ENCODE measurements at regions of chr18 and their contacts with region 1.

Region 1: DNA sequence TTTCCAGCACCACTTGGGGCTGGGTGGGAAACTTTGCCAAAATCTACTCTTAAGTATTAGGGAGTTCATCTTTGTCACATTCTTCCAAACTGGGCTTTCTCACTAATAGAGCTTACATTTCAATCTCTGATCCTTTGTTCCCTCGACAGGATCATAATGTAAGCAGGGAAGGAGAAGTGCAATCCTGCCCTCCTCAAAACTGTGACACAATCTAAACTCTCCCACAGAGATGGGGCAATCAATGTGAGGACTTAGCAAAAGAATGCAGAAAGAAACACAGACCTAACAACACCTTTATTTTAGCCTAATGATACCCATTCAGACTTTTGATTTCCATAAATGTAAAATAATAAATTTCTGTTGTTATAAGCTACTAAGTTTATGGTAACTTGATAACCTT is 40.8 kb downstream of the DSEL start:
- DNase-seq: no peak
- ATAC-seq: no peak
- H3K4me3 ChIP-seq: no peak overlapping the region
- H3K27ac ChIP-seq: no peak overlapping the region
- H3K4me1 ChIP-seq: no peaks in the 10 kb centered on the region
- H3K27me3 ChIP-seq: no peaks in the 10 kb centered on the region
- CTCF ChIP-seq: no peak

Region 2: GRCh38 chr18:65808759-65809158 is 1666.9 kb before region 1 on chr18:
- intact Hi-C with region 1: loop called in 1 of 10 experiments (anchors 5 kb)
- DNase-seq: no peak
- ATAC-seq: no peak
- H3K4me3 ChIP-seq: no peak overlapping the region
- H3K27ac ChIP-seq: no peak overlapping the region
- H3K4me1 ChIP-seq: no peaks in the 10 kb centered on the region
- H3K27me3 ChIP-seq: no peaks in the 10 kb centered on the region
- CTCF ChIP-seq: no peak

Region 3: GRCh38 chr18:67425724-67426123 is 49.9 kb before region 1 on chr18:
- intact Hi-C with region 1: no loop called
- DNase-seq: no peak
- ATAC-seq: no peak
- H3K4me3 ChIP-seq: no peak overlapping the region
- H3K27ac ChIP-seq: no peak overlapping the region
- H3K4me1 ChIP-seq: no peaks in the 10 kb centered on the region
- H3K27me3 ChIP-seq: no peaks in the 10 kb centered on the region
- CTCF ChIP-seq: no peak

Region 4: DNA sequence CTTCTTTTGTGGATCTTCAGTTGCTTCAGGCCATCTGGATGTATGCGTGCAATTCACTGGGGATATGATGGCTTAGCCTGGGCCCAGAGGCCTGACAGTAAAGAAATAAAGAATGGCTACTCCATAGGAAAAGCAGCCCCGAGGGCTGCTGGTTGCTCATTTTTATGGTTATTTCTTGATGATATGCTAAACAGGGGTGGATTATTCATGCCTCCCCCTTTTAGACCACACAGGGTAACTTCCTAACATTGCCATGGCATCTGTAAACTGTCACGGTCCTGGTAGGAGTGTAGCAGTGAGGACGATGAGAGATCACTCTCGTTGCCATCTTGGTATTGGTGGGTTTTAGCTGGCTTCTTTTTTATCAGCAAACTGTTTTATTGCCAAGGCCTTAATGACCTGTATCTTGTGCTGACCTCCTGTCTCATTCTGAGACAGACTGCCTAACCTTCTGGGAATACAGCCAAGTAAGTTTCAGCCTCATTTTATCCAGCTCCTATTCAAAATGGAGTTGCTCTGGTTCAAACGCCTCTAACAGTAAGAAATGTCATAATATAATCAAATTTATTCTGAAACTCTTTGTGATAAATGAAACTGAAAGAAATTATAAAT is 19.7 kb before region 1 on chr18:
- intact Hi-C with region 1: loop called in 1 of 10 experiments (anchors 2 kb)
- DNase-seq: no peak
- ATAC-seq: no peak
- H3K4me3 ChIP-seq: no peak overlapping the region
- H3K27ac ChIP-seq: no peak overlapping the region
- H3K4me1 ChIP-seq: no peaks in the 10 kb centered on the region
- H3K27me3 ChIP-seq: no peaks in the 10 kb centered on the region
- CTCF ChIP-seq: no peak

Measured in heart right ventricle (tissue), 16 donors.